HepG2 (cell line): ENCODE measurements at regions of chr6 and their contacts with region 1.

Region 1: DNA sequence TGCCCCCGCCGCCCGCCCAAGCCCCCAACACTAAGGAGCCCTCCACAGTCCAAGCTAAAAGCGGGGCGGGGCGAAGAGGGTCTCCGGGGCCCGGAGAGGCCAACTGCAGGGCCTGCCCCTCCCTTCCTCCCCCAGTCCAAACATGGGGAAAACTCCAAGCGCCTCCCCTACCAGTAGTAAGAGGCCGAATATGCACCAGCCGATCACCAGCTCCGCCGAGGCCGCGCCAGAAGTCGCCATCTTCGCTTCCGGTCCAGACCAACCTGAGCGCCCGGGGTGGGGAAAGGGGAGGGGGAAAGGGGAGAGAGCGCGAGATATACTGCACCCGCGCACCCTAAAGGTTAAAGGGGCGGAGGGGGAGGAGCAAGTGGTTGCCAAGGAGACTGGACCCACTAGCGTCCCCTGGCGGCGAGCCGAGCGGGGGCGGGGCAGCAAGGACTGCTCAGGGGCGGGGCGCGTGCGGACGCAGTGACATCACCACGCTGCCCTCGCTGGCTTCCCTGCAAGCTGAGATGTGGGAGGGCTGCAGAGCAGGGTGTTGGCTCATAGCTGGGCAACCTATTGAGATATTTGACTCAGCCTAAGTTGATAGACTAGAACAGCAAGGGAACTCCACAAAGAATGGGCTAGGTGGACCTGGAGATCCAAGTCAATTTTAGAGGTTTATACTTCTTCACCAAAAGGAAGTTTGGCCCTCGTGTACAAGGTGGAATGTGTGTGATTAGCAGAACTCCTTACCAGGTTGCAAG is at the start of gene LMBRD1:
- DNase-seq: peak; percentile 89
- ATAC-seq: peak; percentile 96
- H3K4me3 ChIP-seq: peak within 1 kb of the TSS; percentile 70 to 91 (median 90)
- H3K27ac ChIP-seq: peak within 1 kb of the TSS; percentile 88
- H3K4me1 ChIP-seq: peaks cover 20% of the 10 kb centered on the region; the same call in 1 of the 2 replicates
- H3K27me3 ChIP-seq: no peaks in the 10 kb centered on the region; a peak in 1 of 5 replicates
- CTCF ChIP-seq: peak; percentile 98
- EP300 ChIP-seq: peak in 1 of 2 experiments; percentile 50; a peak in 2 of 4 replicates
- POLR2A ChIP-seq: peak; percentile 61 to 79; a peak in 3 of 4 replicates
- RAD21 ChIP-seq: no peak
- total RNA-seq, gene LMBRD1: 12.7 and 21.5 TPM in 2 replicates

Region 2: GRCh38 chr6:69466979-69467570 is 329.7 kb before region 1 on chr6:
- CTCF ChIA-PET with region 1: no interaction called
- POLR2A ChIA-PET with region 1: no interaction called
- in situ Hi-C with region 1: no loop called
- intact Hi-C with region 1: no loop called
- DNase-seq: no peak
- ATAC-seq: no peak
- H3K4me3 ChIP-seq: no peak overlapping the region
- H3K27ac ChIP-seq: no peak overlapping the region
- H3K4me1 ChIP-seq: no peaks in the 10 kb centered on the region
- H3K27me3 ChIP-seq: no peaks in the 10 kb centered on the region
- CTCF ChIP-seq: no peak
- EP300 ChIP-seq: no peak
- POLR2A ChIP-seq: no peak
- RAD21 ChIP-seq: no peak

Region 3: DNA sequence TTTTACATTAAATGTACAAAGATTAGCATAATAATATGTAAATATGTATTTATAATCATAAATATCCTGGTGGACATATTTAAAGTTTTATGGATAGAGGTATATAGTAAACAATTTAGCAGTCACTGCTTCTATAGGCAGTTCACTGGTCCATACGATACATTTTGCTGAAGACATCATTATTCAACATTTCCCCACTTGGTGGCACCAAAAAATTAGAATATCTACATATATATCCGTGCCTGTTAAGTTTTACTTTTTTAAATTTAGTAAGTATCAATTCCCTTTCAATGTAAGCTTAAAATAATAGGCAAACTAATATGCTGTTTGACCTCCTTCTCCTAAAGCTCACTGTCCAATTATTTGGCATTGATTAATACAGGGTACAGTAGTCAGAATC is 64.2 kb before region 1 on chr6:
- CTCF ChIA-PET with region 1: no interaction called
- POLR2A ChIA-PET with region 1: no interaction called
- in situ Hi-C with region 1: no loop called
- intact Hi-C with region 1: loop called (anchors 5 kb)
- DNase-seq: no peak
- ATAC-seq: no peak; the same call in 2 of the 3 replicates
- H3K4me3 ChIP-seq: no peak overlapping the region
- H3K27ac ChIP-seq: no peak overlapping the region
- H3K4me1 ChIP-seq: 0 out of 2 replicates have a peak, but pooled peaks cover 6% of the 10 kb centered on the region
- H3K27me3 ChIP-seq: no peaks in the 10 kb centered on the region
- CTCF ChIP-seq: 0 out of 2 replicates have a peak, but pooled peaks have one; percentile 8
- EP300 ChIP-seq: no peak
- POLR2A ChIP-seq: no peak
- RAD21 ChIP-seq: no peak

Region 4: GRCh38 chr6:69780585-69781178 is 16.1 kb before region 1 on chr6:
- CTCF ChIA-PET with region 1: no interaction called
- POLR2A ChIA-PET with region 1: interaction called, 5 read pairs
- in situ Hi-C with region 1: no loop called
- intact Hi-C with region 1: loop called (anchors 2 kb)
- DNase-seq: peak; percentile 73
- ATAC-seq: peak; percentile 89
- H3K4me3 ChIP-seq: no peak overlapping the region
- H3K27ac ChIP-seq: peak overlapping the region; percentile 57
- H3K4me1 ChIP-seq: peaks cover 17% of the 10 kb centered on the region
- H3K27me3 ChIP-seq: no peaks in the 10 kb centered on the region
- CTCF ChIP-seq: no peak
- EP300 ChIP-seq: peak in 1 of 2 experiments; percentile 44; a peak in 1 of 4 replicates
- POLR2A ChIP-seq: no peak
- RAD21 ChIP-seq: no peak

Region 5: DNA sequence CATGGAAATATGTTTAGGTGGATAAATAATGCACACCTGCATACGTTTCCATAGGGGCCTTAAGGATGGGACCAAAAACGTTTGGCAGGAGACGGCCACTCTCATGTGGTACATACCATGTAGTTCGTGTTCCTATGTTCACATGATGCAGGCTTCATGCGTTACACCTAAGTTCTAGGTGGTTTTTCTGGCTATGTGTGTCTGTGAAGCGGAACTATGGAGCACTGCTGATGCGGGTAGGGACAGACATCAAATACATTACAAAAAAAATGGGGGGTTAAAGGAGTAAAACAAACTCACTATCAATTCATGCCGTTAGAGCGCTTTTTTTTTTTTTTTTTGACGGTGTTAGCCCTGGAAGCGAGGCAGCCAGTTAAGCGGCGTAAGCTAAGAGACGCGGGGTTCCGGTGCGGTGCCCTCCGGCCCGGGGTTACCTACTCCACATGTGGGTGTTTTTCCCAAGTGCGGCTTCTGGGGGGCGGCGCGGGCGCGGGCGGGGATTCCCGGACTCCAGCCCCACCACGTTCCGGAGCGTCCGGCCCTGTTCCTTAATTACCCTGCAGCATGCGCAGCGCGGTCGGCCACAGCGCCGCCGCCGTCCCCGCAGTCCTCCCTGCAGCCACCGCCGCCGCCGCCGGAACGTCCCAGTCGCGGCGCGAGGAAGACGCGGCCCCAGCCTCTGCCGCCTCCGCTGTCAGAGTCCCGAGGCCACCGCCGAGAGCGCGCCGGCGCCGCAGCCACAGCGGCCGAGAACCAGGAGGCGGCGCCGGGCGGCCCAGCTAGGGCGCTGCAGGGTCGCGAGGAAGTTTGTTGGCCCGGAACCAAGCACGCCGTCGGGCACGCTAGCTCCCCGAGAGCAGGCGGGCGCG is 70.2 kb after region 1 on chr6:
- CTCF ChIA-PET with region 1: no interaction called
- POLR2A ChIA-PET with region 1: no interaction called
- in situ Hi-C with region 1: no loop called
- intact Hi-C with region 1: no loop called
- DNase-seq: peak; percentile 12
- ATAC-seq: peak; percentile 99
- H3K4me3 ChIP-seq: peak overlapping the region; percentile 50 to 68 (median 50)
- H3K27ac ChIP-seq: no peak overlapping the region
- H3K4me1 ChIP-seq: peaks cover 16% of the 10 kb centered on the region
- H3K27me3 ChIP-seq: peaks cover 2 to 34% of the 10 kb centered on the region in 2 experiments; a peak in 4 of 5 replicates
- CTCF ChIP-seq: peak; percentile 35; the same call in 1 of the 2 replicates
- EP300 ChIP-seq: no peak
- POLR2A ChIP-seq: no peak
- RAD21 ChIP-seq: no peak